MCF 10A (cell line): ENCODE measurements at regions of chr1 and their contacts with region 1.

Region 1: GRCh38 chr1:26695356-26696118 is at the start of gene ARID1A:
- DNase-seq: peak; percentile 96
- H3K4me3 Mint-ChIP-seq: no peak within 1 kb of the TSS
- H3K27ac Mint-ChIP-seq: peak within 1 kb of the TSS; percentile 71
- H3K4me1 Mint-ChIP-seq: peaks cover 13% of the 10 kb centered on the region
- H3K27me3 Mint-ChIP-seq: no peaks in the 10 kb centered on the region
- CTCF ChIP-seq: no peak
- total RNA-seq, gene ARID1A: 54.2 and 56.9 TPM in 2 replicates

Region 2: DNA sequence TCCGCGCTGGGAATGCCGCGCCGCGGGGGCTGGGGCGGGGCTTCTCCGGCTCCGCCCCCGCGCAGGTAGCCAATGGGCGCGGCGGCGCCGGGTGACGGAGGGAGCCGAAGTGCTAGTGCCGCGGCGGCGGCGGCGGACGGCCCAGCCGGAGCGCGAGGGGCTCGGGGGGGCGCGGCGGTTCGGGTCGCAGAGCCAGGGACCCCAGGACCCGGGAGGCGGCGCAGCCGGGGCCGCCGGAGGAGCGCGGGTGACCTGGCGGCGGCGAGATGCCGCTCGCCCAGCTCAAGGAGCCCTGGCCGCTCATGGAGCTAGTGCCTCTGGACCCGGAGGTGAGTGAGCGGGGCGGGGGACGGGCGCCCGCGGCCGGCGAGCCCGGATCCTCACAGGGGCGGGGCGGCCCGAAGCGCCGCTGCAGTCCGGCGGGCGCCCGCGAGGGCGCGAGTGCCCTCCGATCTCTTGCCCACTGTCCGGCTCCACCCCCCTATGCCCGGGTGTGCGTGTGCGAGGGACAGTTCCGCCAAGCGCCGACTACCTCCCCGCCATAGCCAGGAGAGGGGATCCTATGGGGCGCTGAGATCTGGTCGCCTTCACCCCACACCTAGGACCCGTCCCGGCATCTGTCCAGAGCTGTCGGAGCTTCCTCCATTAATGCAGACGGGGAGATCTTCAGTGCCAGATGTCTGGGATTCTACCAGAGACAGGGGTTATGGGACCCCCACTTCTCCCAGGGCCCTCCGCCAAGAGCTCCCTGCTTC is 165.7 kb before region 1 on chr1 and contains the start of gene RPS6KA1:
- CTCF ChIA-PET with region 1: no interaction called
- POLR2A ChIA-PET with region 1: interaction called, 21 read pairs
- intact Hi-C with region 1: no loop called
- DNase-seq: peak; percentile 56
- H3K4me3 Mint-ChIP-seq: peak within 1 kb of the TSS; percentile 89
- H3K27ac Mint-ChIP-seq: peak within 1 kb of the TSS; percentile 90
- H3K4me1 Mint-ChIP-seq: peaks cover 14% of the 10 kb centered on the region
- H3K27me3 Mint-ChIP-seq: no peaks in the 10 kb centered on the region
- CTCF ChIP-seq: no peak
- total RNA-seq, gene RPS6KA1: 43.9 and 50.9 TPM in 2 replicates

Region 3: DNA sequence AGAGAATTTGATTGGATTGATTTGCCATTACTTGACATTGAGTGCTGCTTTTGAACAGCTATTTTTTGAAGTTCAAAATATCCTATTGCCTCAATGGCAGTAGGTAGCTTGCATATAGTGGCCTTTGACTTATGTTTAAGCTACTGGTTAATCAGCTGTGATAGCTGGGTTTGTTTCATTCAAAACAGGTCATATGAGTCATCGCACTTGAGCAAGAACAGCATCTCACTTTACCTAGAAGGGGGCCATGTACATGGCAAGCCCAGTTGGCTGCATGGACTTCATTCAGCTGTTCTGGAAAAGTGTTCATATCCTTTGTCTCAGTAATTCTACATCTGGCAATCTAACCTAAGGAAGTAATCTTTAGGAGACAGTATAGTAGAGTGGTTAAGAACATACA is 28.7 kb before region 1 on chr1:
- CTCF ChIA-PET with region 1: no interaction called
- POLR2A ChIA-PET with region 1: interaction called, 10 read pairs
- intact Hi-C with region 1: no loop called
- DNase-seq: peak; percentile 71
- H3K4me3 Mint-ChIP-seq: no peak overlapping the region
- H3K27ac Mint-ChIP-seq: no peak overlapping the region
- H3K4me1 Mint-ChIP-seq: peaks cover 7% of the 10 kb centered on the region
- H3K27me3 Mint-ChIP-seq: no peaks in the 10 kb centered on the region
- CTCF ChIP-seq: no peak

Region 4: DNA sequence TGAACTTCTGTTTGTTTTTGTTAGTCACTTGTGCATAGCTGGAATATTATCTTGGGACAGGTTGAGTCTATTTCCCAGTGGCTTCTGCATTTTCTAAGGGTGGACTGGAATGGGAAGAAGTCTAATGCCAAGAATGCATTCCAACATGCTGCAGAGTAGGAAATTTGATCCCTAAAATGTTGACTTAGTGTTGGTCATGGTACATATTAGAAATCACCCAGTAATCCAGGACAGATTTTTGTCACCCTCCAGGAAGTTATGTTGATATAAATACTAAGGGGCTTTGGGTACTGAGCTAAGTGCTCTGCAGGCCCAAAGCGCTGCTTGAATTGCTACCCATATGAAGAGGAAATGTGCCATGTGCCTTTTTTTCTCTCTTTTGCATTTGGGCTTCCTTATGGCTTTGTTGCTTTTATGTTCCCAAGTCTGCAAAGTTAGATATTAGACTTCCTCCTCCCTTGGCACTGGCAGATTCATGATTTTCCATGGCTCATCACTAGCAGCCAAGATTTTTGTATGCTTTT is 10.3 kb after region 1 on chr1:
- CTCF ChIA-PET with region 1: interaction called, 4 read pairs
- POLR2A ChIA-PET with region 1: interaction called, 53 read pairs
- intact Hi-C with region 1: no loop called
- DNase-seq: peak; percentile 57
- H3K4me3 Mint-ChIP-seq: peak overlapping the region; percentile 30
- H3K27ac Mint-ChIP-seq: peak overlapping the region; percentile 63
- H3K4me1 Mint-ChIP-seq: peaks cover 28% of the 10 kb centered on the region
- H3K27me3 Mint-ChIP-seq: no peaks in the 10 kb centered on the region
- CTCF ChIP-seq: no peak

Region 5: GRCh38 chr1:26723013-26723991 is 27.8 kb after region 1 on chr1:
- CTCF ChIA-PET with region 1: interaction called, 10 read pairs
- POLR2A ChIA-PET with region 1: interaction called, 40 read pairs
- intact Hi-C with region 1: loop called (anchors 1 kb)
- DNase-seq: peak; percentile 96
- H3K4me3 Mint-ChIP-seq: peak overlapping the region; percentile 28
- H3K27ac Mint-ChIP-seq: peak overlapping the region; percentile 78
- H3K4me1 Mint-ChIP-seq: peaks cover 48% of the 10 kb centered on the region
- H3K27me3 Mint-ChIP-seq: no peaks in the 10 kb centered on the region
- CTCF ChIP-seq: no peak

Region 6: DNA sequence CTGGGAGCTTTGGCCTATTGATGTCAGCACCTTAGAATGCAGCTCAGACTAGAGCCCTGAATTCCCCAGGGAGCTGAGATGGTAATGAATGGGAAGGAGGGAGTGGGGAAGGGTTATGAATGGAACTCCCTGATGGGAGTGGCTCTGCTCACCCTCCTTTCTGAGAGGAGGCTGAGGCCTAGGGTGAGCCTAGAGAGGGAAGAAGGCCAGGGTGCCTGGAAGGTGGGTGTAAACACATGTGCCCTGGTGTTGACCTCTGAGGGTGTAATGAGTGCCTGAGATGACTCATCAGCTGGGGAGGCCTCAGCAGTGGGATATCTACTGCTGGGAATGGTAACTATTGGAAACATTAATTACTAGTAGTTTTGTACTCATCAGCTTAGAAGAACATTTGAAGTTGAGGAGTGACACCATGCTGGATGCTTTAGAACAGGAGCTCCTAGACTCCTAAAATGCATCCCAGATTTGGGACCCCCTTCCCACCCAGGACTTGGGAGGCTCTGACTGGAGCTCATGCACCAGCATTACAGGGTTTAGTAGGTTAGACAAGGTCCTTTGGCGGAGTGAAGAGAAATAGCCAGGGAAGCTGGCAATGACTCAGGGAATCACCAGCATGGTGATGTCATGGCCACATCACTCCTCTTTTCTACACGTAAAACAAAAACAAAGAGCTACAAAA is 76.2 kb after region 1 on chr1:
- CTCF ChIA-PET with region 1: no interaction called
- POLR2A ChIA-PET with region 1: interaction called, 17 read pairs
- intact Hi-C with region 1: no loop called
- DNase-seq: peak; percentile 95
- H3K4me3 Mint-ChIP-seq: no peak overlapping the region
- H3K27ac Mint-ChIP-seq: no peak overlapping the region
- H3K4me1 Mint-ChIP-seq: peaks cover 38% of the 10 kb centered on the region
- H3K27me3 Mint-ChIP-seq: no peaks in the 10 kb centered on the region
- CTCF ChIP-seq: no peak

Region 7: DNA sequence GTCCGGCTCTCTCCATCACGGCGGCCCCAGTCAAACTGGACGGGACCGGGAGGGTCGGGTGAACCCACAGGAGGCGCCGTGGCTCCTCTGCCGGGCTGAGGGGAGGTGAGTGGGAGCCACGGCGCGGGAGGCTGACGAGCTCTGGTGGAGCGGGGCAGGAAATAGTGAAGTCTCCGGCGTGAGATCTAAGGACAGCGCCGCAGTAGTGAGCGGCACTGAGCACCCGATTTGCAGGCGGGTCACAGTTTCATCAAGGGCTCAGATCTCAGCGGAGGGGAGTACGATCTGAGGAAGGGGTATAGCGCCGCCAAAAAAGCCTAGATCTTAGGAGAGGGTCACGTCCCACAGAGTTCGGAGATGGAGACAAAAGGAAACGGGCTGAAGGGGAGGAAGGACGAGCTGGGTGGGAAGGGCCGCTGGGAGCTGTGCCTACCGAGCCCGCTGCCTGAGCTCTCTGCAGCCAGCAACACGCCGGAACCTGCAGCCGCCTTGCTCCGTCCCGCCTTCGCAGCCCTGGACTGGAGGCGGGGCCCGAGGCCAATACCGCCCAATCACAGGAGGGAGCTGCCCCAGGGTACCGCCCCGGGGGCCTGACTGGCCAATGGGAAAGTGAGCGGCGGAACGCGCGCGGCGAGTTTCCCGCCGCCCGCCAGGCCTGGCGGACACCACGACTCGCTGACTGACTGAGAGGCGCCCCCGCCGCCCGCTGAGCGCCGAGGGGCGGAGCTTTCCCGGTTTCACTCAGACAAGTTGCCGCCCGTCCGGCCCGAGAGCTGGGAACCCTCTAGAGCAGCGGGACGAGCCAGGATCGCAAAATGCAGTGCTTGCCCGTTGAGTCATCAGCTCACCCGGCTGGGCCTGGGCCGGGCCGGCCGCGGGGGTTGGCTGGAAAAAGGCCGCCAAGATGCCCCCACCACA is 169.3 kb after region 1 on chr1:
- CTCF ChIA-PET with region 1: interaction called, 3 read pairs
- POLR2A ChIA-PET with region 1: interaction called, 18 read pairs
- intact Hi-C with region 1: no loop called
- DNase-seq: peak; percentile 99
- H3K4me3 Mint-ChIP-seq: peak overlapping the region; percentile 97
- H3K27ac Mint-ChIP-seq: peak overlapping the region; percentile 94
- H3K4me1 Mint-ChIP-seq: peaks cover 21% of the 10 kb centered on the region
- H3K27me3 Mint-ChIP-seq: no peaks in the 10 kb centered on the region
- CTCF ChIP-seq: no peak